Sigmoid colon (tissue), 7 donors: ENCODE measurements at regions of chr17 and their contacts with region 1.

Region 1: GRCh38 chr17:56939901-56940343 is 20.9 kb downstream of the COIL start:
- DNase-seq: no peak
- H3K4me3 ChIP-seq: no peak overlapping the region
- H3K27ac ChIP-seq: no peak overlapping the region
- H3K4me1 ChIP-seq: no peaks in the 10 kb centered on the region
- H3K27me3 ChIP-seq: no peaks in the 10 kb centered on the region
- CTCF ChIP-seq: peak; percentile 34 to 71 (median 58)
- EP300 ChIP-seq: no peak
- POLR2A ChIP-seq: no peak

Region 2: GRCh38 chr17:56819431-56820145 is 120.3 kb before region 1 on chr17:
- intact Hi-C with region 1: loop called (anchors 1 kb)
- DNase-seq: no peak
- H3K4me3 ChIP-seq: no peak overlapping the region
- H3K27ac ChIP-seq: no peak overlapping the region
- H3K4me1 ChIP-seq: peaks cover 0 to 8% (median 0%) of the 10 kb centered on the region in 4 donors
- H3K27me3 ChIP-seq: no peaks in the 10 kb centered on the region
- CTCF ChIP-seq: peak; percentile 68 to 87 (median 79)
- EP300 ChIP-seq: no peak
- POLR2A ChIP-seq: no peak

Region 3: DNA sequence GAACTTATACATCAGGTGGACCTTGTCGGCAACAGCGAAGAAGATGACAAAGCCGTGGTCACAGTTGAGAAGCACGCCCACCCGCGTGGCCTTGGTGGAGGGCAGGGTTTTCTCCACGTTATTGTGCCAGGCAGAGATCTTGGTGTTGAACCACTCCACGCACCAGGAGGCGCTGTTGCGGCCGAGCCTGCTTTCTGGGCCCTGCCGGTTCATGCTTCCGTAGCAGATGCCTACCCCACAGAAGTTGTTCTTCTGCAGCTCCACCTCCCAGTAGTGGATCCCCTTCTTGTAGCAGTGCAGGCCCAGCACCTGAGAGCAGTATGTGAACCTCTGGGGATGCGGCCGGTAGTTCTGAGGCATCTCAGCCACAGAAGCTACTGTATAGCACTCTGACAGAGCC is 48.1 kb before region 1 on chr17:
- intact Hi-C with region 1: loop called (anchors 5 kb)
- DNase-seq: no peak
- H3K4me3 ChIP-seq: no peak overlapping the region
- H3K27ac ChIP-seq: no peak overlapping the region
- H3K4me1 ChIP-seq: no peaks in the 10 kb centered on the region
- H3K27me3 ChIP-seq: no peaks in the 10 kb centered on the region
- CTCF ChIP-seq: peak in 2 of 4 experiments; percentile 24 to 31
- EP300 ChIP-seq: no peak
- POLR2A ChIP-seq: no peak

Region 4: GRCh38 chr17:57009737-57010445 is 70.0 kb after region 1 on chr17:
- intact Hi-C with region 1: no loop called
- DNase-seq: no peak
- H3K4me3 ChIP-seq: no peak overlapping the region
- H3K27ac ChIP-seq: no peak overlapping the region
- H3K4me1 ChIP-seq: peaks cover 0 to 15% (median 10%) of the 10 kb centered on the region in 4 donors
- H3K27me3 ChIP-seq: no peaks in the 10 kb centered on the region
- CTCF ChIP-seq: peak; percentile 44 to 58 (median 52)
- EP300 ChIP-seq: no peak
- POLR2A ChIP-seq: no peak